AG04450 (cell line): ENCODE measurements at regions of chr2 and their contacts with region 1.

Region 1: DNA sequence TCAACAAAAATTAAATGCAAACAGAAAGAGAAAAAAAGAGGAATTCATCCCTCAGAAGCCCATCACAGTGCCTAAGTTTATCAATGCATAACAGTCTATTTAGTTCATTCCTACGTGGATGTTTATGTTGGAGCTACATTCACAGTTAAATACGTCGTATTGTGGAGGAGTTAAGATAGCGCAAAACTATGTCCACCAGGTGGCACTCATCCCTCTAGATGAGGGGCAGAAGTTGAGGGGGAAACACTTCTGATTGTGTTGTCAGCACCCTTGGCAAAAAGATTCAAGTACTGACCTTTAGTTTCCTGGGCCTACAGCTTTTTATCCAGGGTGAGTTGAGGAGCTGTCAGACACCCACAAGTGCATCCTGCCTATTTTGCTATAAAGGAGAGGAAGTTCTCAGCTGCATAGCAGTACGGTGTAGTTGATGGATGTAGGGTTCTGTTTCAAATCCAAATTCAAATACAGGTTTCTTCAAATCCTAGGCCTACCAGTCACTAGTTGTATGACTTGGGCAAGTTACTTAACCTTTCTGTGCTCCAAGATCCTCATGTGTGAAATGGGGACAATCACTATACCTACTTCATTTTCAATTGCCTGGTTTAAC is 26.8 kb upstream of the MYO1B start:
- DNase-seq: peak; percentile 80
- H3K4me3 ChIP-seq: no peak overlapping the region
- H3K27ac ChIP-seq: no peak overlapping the region
- H3K27me3 ChIP-seq: no peaks in the 10 kb centered on the region
- CTCF ChIP-seq: peak; percentile 79

Region 2: GRCh38 chr2:190867212-190867611 is 351.2 kb before region 1 on chr2:
- CTCF ChIA-PET with region 1: no interaction called
- POLR2A ChIA-PET with region 1: no interaction called
- DNase-seq: no peak
- H3K4me3 ChIP-seq: no peak overlapping the region
- H3K27ac ChIP-seq: no peak overlapping the region
- H3K27me3 ChIP-seq: no peaks in the 10 kb centered on the region
- CTCF ChIP-seq: no peak

Region 3: DNA sequence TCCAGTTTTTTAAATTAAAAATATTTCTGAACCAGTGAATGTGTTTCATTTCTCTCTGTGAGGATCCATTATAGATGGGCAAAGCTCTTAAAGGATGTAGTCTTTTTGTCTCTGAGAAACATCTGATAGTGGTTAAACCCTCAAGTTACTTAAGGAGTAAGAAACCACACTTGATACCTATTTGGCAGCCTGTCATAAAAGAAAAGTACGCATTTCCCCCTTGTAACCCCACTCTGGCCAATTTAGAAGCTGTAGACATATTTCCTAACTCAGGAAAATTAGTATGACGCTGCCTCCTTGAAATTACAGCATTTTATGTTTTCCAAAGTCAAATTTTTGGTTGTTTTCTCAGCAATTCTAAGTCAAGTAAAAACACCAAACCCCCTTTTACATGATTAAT is 69.6 kb before region 1 on chr2:
- CTCF ChIA-PET with region 1: no interaction called
- POLR2A ChIA-PET with region 1: no interaction called
- DNase-seq: no peak
- H3K4me3 ChIP-seq: no peak overlapping the region
- H3K27ac ChIP-seq: no peak overlapping the region
- H3K27me3 ChIP-seq: no peaks in the 10 kb centered on the region
- CTCF ChIP-seq: no peak

Region 4: GRCh38 chr2:191165176-191165643 is 53.2 kb before region 1 on chr2:
- CTCF ChIA-PET with region 1: interaction called, 24 read pairs
- POLR2A ChIA-PET with region 1: no interaction called
- DNase-seq: no peak
- H3K4me3 ChIP-seq: no peak overlapping the region
- H3K27ac ChIP-seq: no peak overlapping the region
- H3K27me3 ChIP-seq: no peaks in the 10 kb centered on the region
- CTCF ChIP-seq: peak; percentile 81

Region 5: GRCh38 chr2:191202881-191203397 is 15.5 kb before region 1 on chr2:
- CTCF ChIA-PET with region 1: interaction called, 36 read pairs
- POLR2A ChIA-PET with region 1: no interaction called
- DNase-seq: peak; percentile 34
- H3K4me3 ChIP-seq: no peak overlapping the region
- H3K27ac ChIP-seq: peak overlapping the region; percentile 87
- H3K27me3 ChIP-seq: no peaks in the 10 kb centered on the region
- CTCF ChIP-seq: no peak

Region 6: DNA sequence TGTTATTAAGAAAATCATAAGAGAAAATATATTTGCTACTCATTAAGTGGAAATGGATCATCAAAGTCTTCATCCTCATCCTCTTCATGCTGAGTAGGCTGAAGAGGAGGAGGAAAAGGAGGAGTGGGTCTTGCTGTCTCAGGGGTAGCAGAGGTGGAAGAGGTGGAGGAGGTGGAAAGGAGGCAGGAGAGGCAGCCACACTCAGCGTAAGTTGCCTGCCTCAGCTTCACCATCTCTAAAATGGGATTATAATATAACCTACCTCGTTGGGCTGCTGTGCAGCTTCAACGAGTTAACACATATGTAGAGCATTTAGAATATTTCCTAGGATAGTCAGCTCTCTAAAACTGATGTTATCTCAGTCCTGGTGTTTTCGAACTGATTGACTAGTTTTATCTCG is 22.5 kb after region 1 on chr2:
- CTCF ChIA-PET with region 1: interaction called, 16 read pairs
- POLR2A ChIA-PET with region 1: interaction called, 8 read pairs
- DNase-seq: no peak
- H3K4me3 ChIP-seq: no peak overlapping the region
- H3K27ac ChIP-seq: no peak overlapping the region
- H3K27me3 ChIP-seq: no peaks in the 10 kb centered on the region
- CTCF ChIP-seq: no peak

Region 7: DNA sequence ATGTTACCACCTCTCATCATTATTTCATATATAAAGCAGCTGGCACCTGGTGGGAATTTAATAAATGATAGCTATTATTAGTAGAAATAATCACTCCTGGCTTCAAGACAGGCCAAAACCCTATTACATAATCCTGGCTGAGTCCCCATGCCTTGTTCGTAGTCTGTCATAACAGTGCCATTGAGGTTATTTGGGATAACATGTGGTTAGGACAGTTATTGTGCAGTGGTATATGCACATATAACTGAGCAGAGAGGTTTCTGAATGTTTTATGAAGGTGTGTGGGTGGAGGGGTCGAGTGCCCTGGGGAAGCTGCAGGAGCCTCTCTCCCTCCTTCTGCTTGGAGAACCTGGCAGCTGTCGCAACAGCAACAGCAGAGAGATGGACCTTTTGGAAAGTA is 297.2 kb after region 1 on chr2:
- CTCF ChIA-PET with region 1: interaction called, 12 read pairs
- POLR2A ChIA-PET with region 1: no interaction called
- DNase-seq: no peak
- H3K4me3 ChIP-seq: no peak overlapping the region
- H3K27ac ChIP-seq: no peak overlapping the region
- H3K27me3 ChIP-seq: no peaks in the 10 kb centered on the region
- CTCF ChIP-seq: no peak